Ascending aorta (tissue), 2 donors: ENCODE measurements at regions of chr11 and their contacts with region 1.

Region 1: DNA sequence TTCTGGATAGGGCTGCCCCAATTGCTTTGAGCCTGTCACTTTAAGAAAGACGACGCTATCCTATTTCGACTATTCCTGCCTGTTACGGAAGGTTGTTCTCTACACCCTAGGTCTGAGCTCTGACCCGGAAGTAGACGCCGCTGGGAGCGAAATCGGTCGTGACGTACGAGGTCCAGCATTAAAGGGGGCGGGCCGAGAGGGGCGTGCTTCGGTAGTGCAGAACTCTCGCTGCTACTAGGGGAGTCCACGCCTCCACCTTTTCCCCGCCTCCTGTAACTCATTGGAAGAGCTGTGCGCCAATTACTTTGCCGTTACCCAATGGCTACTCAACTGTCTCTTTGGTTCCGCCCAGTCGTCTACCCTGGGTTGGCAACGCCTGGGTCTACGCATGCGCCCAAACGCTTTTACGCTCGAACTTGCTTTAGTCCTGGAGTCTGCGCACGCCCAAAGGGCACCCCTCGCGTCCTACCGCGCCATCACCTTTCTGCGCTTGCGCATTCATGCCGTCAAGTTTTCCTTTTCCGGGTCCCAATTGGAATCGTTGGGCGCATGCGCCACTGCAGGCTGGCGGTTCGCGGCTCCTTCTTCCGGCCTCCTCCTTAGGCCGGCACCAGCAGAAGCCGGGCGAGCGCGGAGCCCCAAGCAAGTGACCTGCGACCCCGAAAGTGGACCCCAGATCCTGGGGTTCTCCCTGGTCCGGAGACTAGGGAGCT is at the start of gene PCNX3:
- DNase-seq: peak; percentile 100
- H3K4me3 ChIP-seq: peak within 1 kb of the TSS; percentile 95 to 99
- H3K27ac ChIP-seq: peak within 1 kb of the TSS; percentile 90 to 95
- H3K4me1 ChIP-seq: peaks cover 21 to 35% of the 10 kb centered on the region in 2 donors
- H3K27me3 ChIP-seq: no peaks in the 10 kb centered on the region
- CTCF ChIP-seq: no peak
- total RNA-seq, gene PCNX3: 181 TPM

Region 2: DNA sequence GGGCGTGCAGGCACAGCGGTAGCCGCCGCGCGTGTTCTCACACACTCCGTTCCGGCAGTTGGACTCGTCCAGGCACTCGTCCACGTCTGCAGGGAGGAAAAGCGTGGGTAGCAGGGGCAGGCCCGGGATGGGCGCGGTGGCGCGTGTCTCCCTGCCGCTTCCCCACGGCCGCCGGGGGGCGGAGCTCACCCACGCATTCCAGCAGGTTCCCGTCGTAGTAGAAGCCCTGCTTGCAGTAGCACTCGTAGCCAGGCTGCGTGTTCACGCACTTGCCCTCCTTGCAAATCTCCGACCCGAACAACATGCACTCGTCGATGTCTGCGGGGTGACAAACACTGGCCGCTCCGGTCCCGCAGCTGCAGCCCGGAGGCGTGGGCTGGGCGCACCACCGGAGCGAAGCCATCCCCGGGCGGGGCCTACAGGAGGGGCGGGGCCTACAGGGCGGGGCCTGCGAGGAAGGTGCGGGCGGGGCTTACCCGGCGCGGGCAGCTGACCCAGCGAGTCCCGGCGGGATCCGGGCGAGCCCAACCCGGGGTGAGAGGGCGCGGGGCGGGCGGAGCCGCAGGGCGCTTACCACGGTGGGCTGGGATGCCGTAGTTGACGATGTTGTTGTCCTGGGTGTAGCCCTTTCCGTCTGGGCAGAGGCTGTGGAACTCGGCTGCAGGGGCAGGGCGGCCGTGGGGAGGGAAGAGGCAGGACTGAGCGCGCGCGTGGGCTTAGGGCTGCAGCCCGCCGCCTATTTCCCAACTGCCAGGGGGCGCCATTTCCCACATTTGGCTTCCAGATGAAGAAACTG is 74.9 kb before region 1 on chr11:
- intact Hi-C with region 1: loop called (anchors 1 kb)
- DNase-seq: peak; percentile 54 to 94
- H3K4me3 ChIP-seq: peak overlapping the region; percentile 58 to 68
- H3K27ac ChIP-seq: peak overlapping the region; percentile 80 to 90
- H3K4me1 ChIP-seq: peaks cover 16 to 22% of the 10 kb centered on the region in 2 donors
- H3K27me3 ChIP-seq: no peaks in the 10 kb centered on the region
- CTCF ChIP-seq: peak; percentile 85 to 98 (median 94)

Region 3: GRCh38 chr11:65652511-65653231 is 37.3 kb after region 1 on chr11:
- intact Hi-C with region 1: loop called (anchors 1 kb)
- DNase-seq: peak; percentile 71 to 96
- H3K4me3 ChIP-seq: peak overlapping the region; percentile 51 to 62
- H3K27ac ChIP-seq: peak overlapping the region; percentile 89 to 93
- H3K4me1 ChIP-seq: peaks cover 12 to 17% of the 10 kb centered on the region in 2 donors
- H3K27me3 ChIP-seq: no peaks in the 10 kb centered on the region
- CTCF ChIP-seq: no peak

Region 4: GRCh38 chr11:65711785-65712632 is 96.6 kb after region 1 on chr11 and contains the start of gene KAT5:
- intact Hi-C with region 1: loop called (anchors 10 kb)
- DNase-seq: peak; percentile 96 to 99
- H3K4me3 ChIP-seq: peak within 1 kb of the TSS; percentile 72 to 94
- H3K27ac ChIP-seq: peak within 1 kb of the TSS; percentile 96 to 100
- H3K4me1 ChIP-seq: peaks cover 4 to 19% of the 10 kb centered on the region in 2 donors
- H3K27me3 ChIP-seq: no peaks in the 10 kb centered on the region
- CTCF ChIP-seq: peak; percentile 95 to 99 (median 98)
- total RNA-seq, gene KAT5: 31.0 TPM

Region 5: DNA sequence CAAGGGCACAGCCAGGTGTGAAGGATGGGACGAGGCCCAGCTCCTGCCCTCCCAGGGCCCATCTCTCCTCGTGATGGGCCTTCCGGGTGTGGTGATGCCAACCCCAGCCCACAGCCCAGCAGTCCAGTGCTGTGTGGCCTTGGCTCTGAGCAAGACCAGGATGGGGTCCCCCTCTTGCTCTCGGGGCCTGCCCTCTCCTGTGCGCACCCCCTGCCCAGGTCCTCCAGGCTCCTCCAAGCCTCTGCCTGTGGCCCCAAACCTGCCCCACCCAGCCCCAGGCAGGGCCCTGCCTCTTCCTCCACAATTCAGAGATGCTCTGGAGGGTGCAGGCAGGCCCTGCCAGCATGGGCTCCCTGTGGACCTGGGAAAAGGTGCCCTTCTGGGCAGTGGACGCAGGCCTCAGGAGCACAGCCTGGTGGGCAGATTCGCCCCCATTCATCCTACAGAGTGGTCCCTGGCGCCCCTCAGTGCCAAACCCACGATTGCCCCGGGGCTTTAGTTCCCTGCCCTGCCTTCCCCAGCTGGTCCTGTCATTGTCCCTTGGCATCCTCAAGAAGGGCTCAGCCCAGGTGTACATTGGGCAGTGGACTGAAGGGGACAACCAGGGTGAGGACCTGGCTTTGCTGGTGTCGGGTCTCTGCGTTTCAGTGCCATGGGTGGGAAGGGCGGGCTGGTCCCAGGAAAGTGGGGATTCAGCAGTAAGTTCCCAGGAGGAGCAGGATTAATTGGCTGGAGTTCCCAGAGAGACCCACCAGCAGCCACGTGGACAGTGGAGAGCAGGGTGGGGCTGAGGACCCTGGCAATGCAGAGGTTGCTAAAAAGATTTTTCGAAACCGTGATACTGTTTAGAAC is 366.8 kb after region 1 on chr11:
- intact Hi-C with region 1: no loop called
- DNase-seq: no peak
- H3K4me3 ChIP-seq: no peak overlapping the region
- H3K27ac ChIP-seq: no peak overlapping the region
- H3K4me1 ChIP-seq: no peaks in the 10 kb centered on the region
- H3K27me3 ChIP-seq: no peaks in the 10 kb centered on the region
- CTCF ChIP-seq: no peak